ENCODE measurements at regions of chr2 and their contacts with region 1.

Region 1: DNA sequence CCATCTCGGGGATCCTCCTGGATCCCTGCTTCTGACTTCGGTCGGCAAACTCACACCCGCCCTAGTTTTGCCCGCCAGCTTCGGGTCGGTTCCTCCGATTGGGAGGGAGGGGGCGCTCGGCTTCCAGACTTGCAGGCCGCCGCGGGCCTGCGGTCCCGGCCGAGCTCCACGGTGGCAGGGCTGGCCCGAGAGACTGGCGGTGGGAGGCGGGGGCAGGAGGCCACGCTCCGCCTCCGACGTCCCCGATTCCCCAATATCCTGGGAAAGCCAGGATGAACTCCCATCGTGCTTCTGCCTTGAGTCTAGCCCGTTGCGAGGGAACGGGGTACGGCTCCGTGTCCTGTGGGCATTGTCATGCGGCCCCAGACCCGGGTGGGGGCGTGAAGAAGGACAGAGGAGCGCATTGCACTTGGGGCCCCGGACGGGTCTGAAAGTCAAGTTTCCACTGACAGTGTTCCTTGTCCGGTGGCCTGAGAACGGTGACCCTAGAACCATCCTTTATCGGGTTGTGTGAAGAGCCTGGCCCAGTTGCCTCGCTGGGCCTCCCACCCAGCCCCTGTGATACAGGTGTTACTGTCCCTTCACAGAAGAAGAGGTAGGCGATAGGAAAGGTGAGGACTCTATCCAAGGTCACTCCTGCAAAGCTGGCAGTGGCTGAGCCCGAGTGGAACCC is 2.4 kb upstream of the INHBB start:
- DNase-seq: peak; percentile 85 to 92
- H3K4me3 ChIP-seq: peak overlapping the region; percentile 56
- H3K4me3 Mint-ChIP-seq: peak overlapping the region; percentile 68
- H3K27ac Mint-ChIP-seq: no peak overlapping the region
- H3K4me1 ChIP-seq: peaks cover 8% of the 10 kb centered on the region
- H3K4me1 Mint-ChIP-seq: peaks cover 17% of the 10 kb centered on the region
- H3K27me3 ChIP-seq: no peaks in the 10 kb centered on the region; the same call in 1 of the 2 replicates
- H3K27me3 Mint-ChIP-seq: peaks cover 3% of the 10 kb centered on the region
- CTCF ChIP-seq: peak; percentile 85 to 91

Region 2: DNA sequence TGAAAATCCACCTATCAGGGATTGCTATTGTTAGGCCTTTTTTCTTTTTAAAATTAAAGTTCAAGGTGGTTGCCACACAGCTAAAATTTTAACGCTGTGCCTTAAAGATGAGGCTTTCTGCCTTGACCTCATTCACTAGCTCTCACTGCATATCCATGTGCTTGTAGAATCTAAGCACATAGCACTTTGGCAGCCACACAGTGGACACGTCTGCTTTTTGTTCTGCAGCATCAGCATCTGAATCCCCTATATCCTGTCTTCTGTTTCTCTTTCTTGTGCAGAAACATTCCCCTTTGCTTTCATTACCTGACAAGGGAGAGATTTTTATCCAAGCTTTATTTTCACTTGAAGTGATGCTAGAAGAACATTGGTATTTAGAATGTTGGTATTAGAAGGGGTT is 52.8 kb before region 1 on chr2:
- CTCF ChIA-PET with region 1: interaction called, 11 read pairs
- POLR2A ChIA-PET with region 1: no interaction called
- intact Hi-C with region 1: no loop called
- DNase-seq: no peak
- H3K4me3 ChIP-seq: no peak overlapping the region
- H3K4me3 Mint-ChIP-seq: no peak overlapping the region
- H3K27ac Mint-ChIP-seq: peak overlapping the region; percentile 68
- H3K4me1 ChIP-seq: peaks cover 34% of the 10 kb centered on the region
- H3K4me1 Mint-ChIP-seq: peaks cover 33% of the 10 kb centered on the region
- H3K27me3 ChIP-seq: no peaks in the 10 kb centered on the region
- H3K27me3 Mint-ChIP-seq: no peaks in the 10 kb centered on the region
- CTCF ChIP-seq: no peak

Region 3: DNA sequence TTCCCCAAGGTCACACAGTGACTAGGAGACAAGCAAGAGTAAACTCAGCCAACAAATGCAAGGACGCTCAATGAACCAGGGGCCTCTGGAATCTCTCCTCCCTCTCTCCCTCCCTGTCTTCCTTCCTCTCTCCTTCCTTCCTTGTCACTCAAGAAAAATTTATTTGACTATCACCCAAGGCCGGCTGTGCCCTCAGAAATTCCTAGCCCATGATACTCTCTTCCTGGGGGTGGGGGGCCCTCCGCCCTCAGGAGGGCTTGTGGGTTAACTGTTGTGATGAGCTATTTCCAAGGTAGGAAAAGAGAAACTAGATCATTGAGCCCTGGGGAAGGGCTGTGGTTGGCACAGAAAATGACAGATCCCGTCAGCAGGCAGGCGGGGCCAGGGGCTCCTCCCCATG is 24.1 kb after region 1 on chr2:
- CTCF ChIA-PET with region 1: no interaction called
- POLR2A ChIA-PET with region 1: no interaction called
- intact Hi-C with region 1: no loop called
- DNase-seq: no peak
- H3K4me3 ChIP-seq: no peak overlapping the region
- H3K4me3 Mint-ChIP-seq: no peak overlapping the region
- H3K27ac Mint-ChIP-seq: no peak overlapping the region
- H3K4me1 ChIP-seq: no peaks in the 10 kb centered on the region
- H3K4me1 Mint-ChIP-seq: no peaks in the 10 kb centered on the region
- H3K27me3 ChIP-seq: no peaks in the 10 kb centered on the region
- H3K27me3 Mint-ChIP-seq: no peaks in the 10 kb centered on the region
- CTCF ChIP-seq: no peak

Region 4: GRCh38 chr2:120398996-120399888 is 55.7 kb after region 1 on chr2:
- CTCF ChIA-PET with region 1: interaction called, 6 read pairs
- POLR2A ChIA-PET with region 1: interaction called, 12 read pairs
- intact Hi-C with region 1: loop called (anchors 1 kb)
- DNase-seq: peak; percentile 96 to 98
- H3K4me3 ChIP-seq: no peak overlapping the region
- H3K4me3 Mint-ChIP-seq: peak overlapping the region; percentile 4
- H3K27ac Mint-ChIP-seq: peak overlapping the region; percentile 96
- H3K4me1 ChIP-seq: peaks cover 88% of the 10 kb centered on the region
- H3K4me1 Mint-ChIP-seq: peaks cover 58% of the 10 kb centered on the region
- H3K27me3 ChIP-seq: no peaks in the 10 kb centered on the region
- H3K27me3 Mint-ChIP-seq: no peaks in the 10 kb centered on the region
- CTCF ChIP-seq: peak in 1 of 2 experiments; percentile 31

Region 5: GRCh38 chr2:120456867-120457266 is 113.3 kb after region 1 on chr2:
- CTCF ChIA-PET with region 1: interaction called, 3 read pairs
- POLR2A ChIA-PET with region 1: no interaction called
- intact Hi-C with region 1: loop called (anchors 1 kb)
- DNase-seq: peak in 1 of 2 experiments; percentile 42
- H3K4me3 ChIP-seq: no peak overlapping the region
- H3K4me3 Mint-ChIP-seq: no peak overlapping the region
- H3K27ac Mint-ChIP-seq: no peak overlapping the region
- H3K4me1 ChIP-seq: peaks cover 8% of the 10 kb centered on the region
- H3K4me1 Mint-ChIP-seq: peaks cover 10% of the 10 kb centered on the region
- H3K27me3 ChIP-seq: no peaks in the 10 kb centered on the region
- H3K27me3 Mint-ChIP-seq: no peaks in the 10 kb centered on the region
- CTCF ChIP-seq: peak; percentile 12 to 60

Region 6: DNA sequence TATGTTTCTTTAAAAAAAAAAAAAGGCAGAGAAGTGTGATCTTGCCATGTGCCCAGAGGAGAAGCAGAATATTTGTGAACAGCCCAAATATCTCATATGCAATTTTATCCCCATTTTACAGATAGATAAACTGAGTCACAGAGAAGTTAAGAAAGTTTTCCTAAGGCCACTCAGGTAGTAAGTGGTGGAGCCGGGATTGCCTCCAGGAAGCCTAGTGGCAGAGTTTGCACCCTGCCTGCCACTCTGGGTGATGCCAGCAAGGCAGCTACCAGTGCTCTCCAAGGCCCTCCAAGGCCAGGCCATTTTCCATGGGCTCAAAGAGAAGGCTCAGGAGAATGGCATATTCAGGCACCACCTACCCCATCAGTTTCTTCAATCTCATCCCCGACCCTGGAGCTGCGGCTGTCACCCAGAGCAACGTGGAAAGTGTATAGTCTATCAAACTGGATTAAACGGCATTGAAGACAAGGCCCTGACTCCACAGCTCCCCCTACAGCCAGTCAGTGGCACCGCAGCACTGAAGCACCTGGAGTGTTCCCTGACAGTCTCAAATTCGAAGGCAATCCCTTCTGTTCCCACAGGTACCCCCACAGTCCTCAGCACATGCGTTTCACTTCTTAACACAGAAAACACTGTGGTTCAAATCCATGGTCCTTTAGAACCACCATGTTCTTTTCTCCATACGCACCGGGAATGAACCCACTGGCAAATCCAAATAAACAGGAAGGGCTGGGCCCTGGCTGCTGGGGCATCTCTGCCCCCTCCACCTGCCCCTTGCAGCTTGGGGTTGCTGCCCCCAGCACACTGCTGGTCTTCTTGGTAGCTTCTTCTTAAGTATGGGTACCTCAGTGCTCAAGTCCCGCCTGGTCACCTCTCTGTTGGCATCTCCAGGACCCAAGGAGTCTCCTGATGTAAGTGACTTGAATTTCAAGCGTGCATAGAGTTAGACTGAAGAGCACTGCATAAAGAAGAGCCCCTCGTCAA is 177.7 kb after region 1 on chr2:
- CTCF ChIA-PET with region 1: interaction called, 4 read pairs
- POLR2A ChIA-PET with region 1: no interaction called
- intact Hi-C with region 1: loop called (anchors 2 kb)
- DNase-seq: peak in 1 of 2 experiments; percentile 46
- H3K4me3 ChIP-seq: no peak overlapping the region
- H3K4me3 Mint-ChIP-seq: no peak overlapping the region
- H3K27ac Mint-ChIP-seq: no peak overlapping the region
- H3K4me1 ChIP-seq: peaks cover 9% of the 10 kb centered on the region
- H3K4me1 Mint-ChIP-seq: peaks cover 16% of the 10 kb centered on the region
- H3K27me3 ChIP-seq: no peaks in the 10 kb centered on the region
- H3K27me3 Mint-ChIP-seq: no peaks in the 10 kb centered on the region
- CTCF ChIP-seq: peak; percentile 62 to 82

Region 7: GRCh38 chr2:120620025-120620793 is 276.6 kb after region 1 on chr2:
- CTCF ChIA-PET with region 1: interaction called, 10 read pairs
- POLR2A ChIA-PET with region 1: no interaction called
- intact Hi-C with region 1: no loop called
- DNase-seq: no peak
- H3K4me3 ChIP-seq: no peak overlapping the region
- H3K4me3 Mint-ChIP-seq: no peak overlapping the region
- H3K27ac Mint-ChIP-seq: peak overlapping the region; percentile 50
- H3K4me1 ChIP-seq: peaks cover 11% of the 10 kb centered on the region
- H3K4me1 Mint-ChIP-seq: no peaks in the 10 kb centered on the region
- H3K27me3 ChIP-seq: no peaks in the 10 kb centered on the region
- H3K27me3 Mint-ChIP-seq: no peaks in the 10 kb centered on the region
- CTCF ChIP-seq: no peak

Measured in Caco-2 (cell line).